ENCODE measurements at regions of chr13 and their contacts with region 1.

Region 1: DNA sequence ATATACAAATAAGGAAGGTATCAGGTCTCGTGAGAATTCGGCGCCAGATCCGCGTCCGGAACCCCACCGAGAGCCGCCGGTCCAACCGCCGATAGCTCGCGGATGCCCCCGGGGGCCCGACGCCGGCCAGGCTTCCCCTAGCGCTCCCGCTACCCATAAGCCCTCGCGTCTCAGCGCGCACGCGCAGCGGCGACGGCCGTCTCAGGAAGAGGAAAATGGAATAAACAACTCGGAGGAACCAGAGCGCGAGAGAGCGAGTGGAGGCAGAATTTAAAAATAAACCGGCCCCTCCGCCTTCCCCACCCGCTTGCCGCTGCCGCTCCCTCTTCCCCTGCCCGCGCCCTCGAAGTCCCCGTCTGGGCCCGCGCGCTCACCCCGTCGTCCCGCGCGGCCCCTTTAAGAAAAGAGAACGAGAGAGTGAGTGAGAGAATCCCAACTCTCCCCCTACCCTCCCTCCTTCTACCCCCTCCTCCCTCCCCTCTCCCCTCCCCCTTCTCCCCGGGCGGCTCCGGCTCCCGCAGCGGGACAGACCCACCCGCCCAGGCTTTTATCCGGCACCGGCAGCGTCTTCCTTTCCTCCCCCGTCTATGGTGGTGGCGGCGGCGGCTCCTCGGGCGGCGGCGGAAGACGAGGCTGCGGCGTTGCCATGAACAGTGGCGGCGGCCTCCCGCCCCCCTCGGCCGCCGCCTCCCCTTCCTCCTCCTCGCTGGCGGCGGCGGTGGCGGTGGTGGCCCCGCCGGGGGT is at the start of gene PAN3:
- DNase-seq: peak; percentile 91 to 94 (median 92)
- H3K4me3 ChIP-seq: peak within 1 kb of the TSS; percentile 62 to 67
- H3K4me3 Mint-ChIP-seq: peak within 1 kb of the TSS; percentile 91 to 99 (median 96)
- H3K27ac ChIP-seq: peak within 1 kb of the TSS; percentile 97
- H3K27ac Mint-ChIP-seq: peak within 1 kb of the TSS; percentile 93 to 99 (median 98)
- H3K4me1 ChIP-seq: peaks cover 44% of the 10 kb centered on the region
- H3K4me1 Mint-ChIP-seq: peaks cover 37 to 62% (median 45%) of the 10 kb centered on the region in 4 donors
- H3K27me3 ChIP-seq: no peaks in the 10 kb centered on the region
- H3K27me3 Mint-ChIP-seq: peaks cover 0 to 2% of the 10 kb centered on the region in 2 donors
- total RNA-seq, gene PAN3: 66.0 to 66.7 TPM

Region 2: DNA sequence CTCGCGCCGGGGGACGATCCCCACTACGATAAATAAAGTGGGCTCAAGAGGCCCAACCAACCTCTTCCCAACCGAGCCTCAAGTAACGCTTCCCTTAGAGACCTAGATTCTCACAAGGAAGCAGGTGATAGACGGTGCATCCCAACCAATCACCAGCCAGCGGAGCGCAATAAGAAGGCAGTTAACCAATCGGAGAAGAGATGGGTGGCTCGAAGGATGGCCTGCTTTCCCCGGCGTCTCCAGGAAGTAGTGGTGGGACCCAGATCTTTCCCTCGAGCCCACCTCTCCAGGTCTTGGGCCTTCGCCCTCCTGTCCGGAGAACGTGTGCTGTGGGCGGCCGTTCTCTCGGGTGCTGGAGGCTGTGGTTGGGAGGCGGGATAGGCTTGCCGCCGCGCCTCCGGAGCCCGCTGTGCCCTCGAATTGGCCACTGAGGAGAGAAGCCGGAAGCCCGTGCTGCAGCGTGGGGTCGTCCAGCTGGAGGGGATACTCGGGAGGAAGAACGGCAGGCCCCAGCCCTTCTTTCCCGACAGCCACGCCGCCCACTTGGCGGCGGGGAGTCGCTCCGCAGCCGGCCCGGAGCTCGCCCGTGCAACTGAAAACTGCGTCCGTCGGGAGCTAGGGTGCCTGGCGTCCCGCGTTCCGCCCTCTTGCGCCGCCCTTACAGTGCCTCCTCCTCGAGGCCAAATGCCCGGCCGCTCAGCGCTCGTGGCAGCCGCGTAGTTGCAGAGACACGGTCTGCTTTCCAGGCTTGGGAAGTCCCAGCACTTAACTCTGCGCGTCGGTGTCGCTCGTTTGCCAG is 1916.3 kb before region 1 on chr13 and contains the start of gene RNF6:
- CTCF ChIA-PET with region 1: no interaction called
- POLR2A ChIA-PET with region 1: interaction called, 3 read pairs
- intact Hi-C with region 1: loop called (anchors 2 kb)
- DNase-seq: peak; percentile 88 to 95 (median 91)
- H3K4me3 ChIP-seq: peak within 1 kb of the TSS; percentile 86 to 98
- H3K4me3 Mint-ChIP-seq: peak within 1 kb of the TSS; percentile 95 to 100 (median 100)
- H3K27ac ChIP-seq: peak within 1 kb of the TSS; percentile 94
- H3K27ac Mint-ChIP-seq: peak within 1 kb of the TSS; percentile 92 to 99 (median 99)
- H3K4me1 ChIP-seq: peaks cover 29% of the 10 kb centered on the region
- H3K4me1 Mint-ChIP-seq: peaks cover 28 to 48% (median 41%) of the 10 kb centered on the region in 4 donors
- H3K27me3 ChIP-seq: no peaks in the 10 kb centered on the region
- H3K27me3 Mint-ChIP-seq: peaks cover 0 to 2% of the 10 kb centered on the region in 2 donors
- total RNA-seq, gene RNF6: 46.7 to 47.9 TPM

Region 3: GRCh38 chr13:27251166-27252091 is 886.8 kb before region 1 on chr13 and contains the start of gene RPL21:
- CTCF ChIA-PET with region 1: no interaction called
- POLR2A ChIA-PET with region 1: interaction called, 3 read pairs
- intact Hi-C with region 1: loop called (anchors 1 kb)
- DNase-seq: peak; percentile 92 to 95 (median 93)
- H3K4me3 ChIP-seq: peak within 1 kb of the TSS; percentile 84 to 98
- H3K4me3 Mint-ChIP-seq: peak within 1 kb of the TSS; percentile 93 to 99 (median 96)
- H3K27ac ChIP-seq: peak within 1 kb of the TSS; percentile 99
- H3K27ac Mint-ChIP-seq: peak within 1 kb of the TSS; percentile 98 to 100 (median 100)
- H3K4me1 ChIP-seq: peaks cover 44% of the 10 kb centered on the region
- H3K4me1 Mint-ChIP-seq: peaks cover 34 to 74% (median 54%) of the 10 kb centered on the region in 4 donors
- H3K27me3 ChIP-seq: no peaks in the 10 kb centered on the region
- H3K27me3 Mint-ChIP-seq: no peaks in the 10 kb centered on the region
- total RNA-seq, gene RPL21: 2,008 to 2,177 TPM

Region 4: DNA sequence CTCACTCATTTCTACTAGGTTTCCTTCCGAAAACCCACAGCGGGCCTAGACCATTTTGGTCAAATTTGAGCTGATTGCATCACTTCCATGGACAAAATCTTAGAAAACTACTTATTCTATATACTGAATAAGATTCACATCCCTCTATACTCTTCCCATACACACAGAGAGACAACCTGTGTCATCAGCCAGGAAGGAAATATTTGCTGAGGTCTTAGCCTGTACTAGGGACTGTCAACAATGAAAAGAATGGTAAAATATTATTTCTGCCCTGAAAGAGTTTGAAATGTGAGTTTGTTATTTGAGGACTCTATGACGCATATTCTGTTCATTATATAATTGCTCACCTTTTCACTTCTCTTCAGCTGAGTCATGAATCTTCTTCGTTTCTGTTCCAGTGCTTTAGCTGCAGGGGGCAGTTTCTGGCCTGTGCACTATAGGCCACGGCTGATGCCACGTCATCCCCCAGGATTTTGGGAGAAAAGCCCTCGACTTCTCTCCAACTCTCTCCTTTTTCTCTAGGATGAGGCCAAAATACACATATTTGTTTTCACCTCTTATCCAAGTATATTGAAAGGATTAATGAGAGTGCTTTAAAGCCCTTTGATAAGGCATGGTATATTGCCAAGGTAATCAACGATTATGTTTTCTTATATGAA is 298.2 kb before region 1 on chr13:
- CTCF ChIA-PET with region 1: no interaction called
- POLR2A ChIA-PET with region 1: no interaction called
- intact Hi-C with region 1: no loop called
- DNase-seq: no peak
- H3K4me3 ChIP-seq: no peak overlapping the region
- H3K4me3 Mint-ChIP-seq: no peak overlapping the region
- H3K27ac ChIP-seq: no peak overlapping the region
- H3K27ac Mint-ChIP-seq: no peak overlapping the region
- H3K4me1 ChIP-seq: no peaks in the 10 kb centered on the region
- H3K4me1 Mint-ChIP-seq: no peaks in the 10 kb centered on the region
- H3K27me3 ChIP-seq: no peaks in the 10 kb centered on the region
- H3K27me3 Mint-ChIP-seq: peaks cover 22 to 29% of the 10 kb centered on the region in 2 donors

Region 5: GRCh38 chr13:28058866-28059624 is 79.1 kb before region 1 on chr13:
- CTCF ChIA-PET with region 1: interaction called, 3 read pairs
- POLR2A ChIA-PET with region 1: no interaction called
- intact Hi-C with region 1: loop called (anchors 5 kb)
- DNase-seq: peak in 4 of 5 donors; percentile 21 to 22 (median 22)
- H3K4me3 ChIP-seq: no peak overlapping the region
- H3K4me3 Mint-ChIP-seq: no peak overlapping the region
- H3K27ac ChIP-seq: no peak overlapping the region
- H3K27ac Mint-ChIP-seq: no peak overlapping the region
- H3K4me1 ChIP-seq: no peaks in the 10 kb centered on the region
- H3K4me1 Mint-ChIP-seq: peaks cover 0 to 2% (median 0%) of the 10 kb centered on the region in 4 donors
- H3K27me3 ChIP-seq: peaks cover 4% of the 10 kb centered on the region
- H3K27me3 Mint-ChIP-seq: peaks cover 16 to 18% of the 10 kb centered on the region in 2 donors

Region 6: GRCh38 chr13:28204690-28205443 is 66.7 kb after region 1 on chr13:
- CTCF ChIA-PET with region 1: no interaction called
- POLR2A ChIA-PET with region 1: interaction called, 3 read pairs
- intact Hi-C with region 1: loop called (anchors 5 kb)
- DNase-seq: no peak
- H3K4me3 ChIP-seq: no peak overlapping the region
- H3K4me3 Mint-ChIP-seq: peak overlapping the region in 1 of 8 donors; percentile 24
- H3K27ac ChIP-seq: no peak overlapping the region
- H3K27ac Mint-ChIP-seq: peak overlapping the region in 2 of 7 donors; percentile 49 to 61
- H3K4me1 ChIP-seq: peaks cover 12% of the 10 kb centered on the region
- H3K4me1 Mint-ChIP-seq: peaks cover 21 to 43% (median 36%) of the 10 kb centered on the region in 4 donors
- H3K27me3 ChIP-seq: no peaks in the 10 kb centered on the region
- H3K27me3 Mint-ChIP-seq: no peaks in the 10 kb centered on the region

Region 7: DNA sequence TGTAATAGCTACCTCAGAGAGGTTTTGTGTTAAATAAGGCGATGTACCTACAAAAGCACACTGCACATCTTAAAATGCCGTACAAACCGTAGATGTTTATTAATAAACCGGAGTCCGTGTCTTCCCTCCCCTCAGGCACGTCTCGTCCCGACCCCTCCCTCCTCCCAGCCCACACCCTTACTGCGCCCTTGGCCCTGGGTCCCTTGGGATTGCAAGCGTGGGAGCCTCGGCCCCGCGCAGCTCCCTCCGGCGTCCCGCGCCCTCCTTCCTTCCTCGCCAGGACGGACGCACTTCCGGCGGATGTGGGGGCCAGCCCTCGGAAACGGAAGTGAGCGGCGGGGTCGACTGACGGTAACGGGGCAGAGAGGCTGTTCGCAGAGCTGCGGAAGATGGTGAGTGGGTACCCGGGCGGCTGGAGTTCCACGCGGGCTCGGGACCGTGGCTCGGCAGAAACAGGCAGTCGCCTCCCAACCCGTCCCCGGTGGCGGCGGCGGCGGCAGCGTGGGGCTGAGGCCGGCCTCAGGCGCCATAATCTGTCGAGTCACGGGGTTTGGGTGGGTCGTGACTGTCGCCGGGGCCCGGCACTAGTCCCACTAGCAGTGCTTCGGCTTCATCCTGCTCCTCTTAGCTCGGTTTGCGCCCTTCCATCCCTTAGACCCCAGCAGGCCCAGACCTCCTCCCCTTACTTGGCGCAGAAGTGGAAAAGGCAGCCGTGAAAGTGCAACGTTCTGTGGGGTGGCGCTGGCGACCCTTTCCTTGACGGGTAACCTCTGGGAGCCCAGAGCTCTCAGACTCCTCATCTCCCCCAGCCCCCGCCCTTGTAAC is 520.8 kb after region 1 on chr13 and contains the start of gene POMP:
- CTCF ChIA-PET with region 1: no interaction called
- POLR2A ChIA-PET with region 1: interaction called, 8 read pairs
- intact Hi-C with region 1: loop called (anchors 1 kb)
- DNase-seq: peak; percentile 90 to 94 (median 93)
- H3K4me3 ChIP-seq: peak within 1 kb of the TSS; percentile 76 to 93
- H3K4me3 Mint-ChIP-seq: peak within 1 kb of the TSS; percentile 95 to 99 (median 98)
- H3K27ac ChIP-seq: peak within 1 kb of the TSS; percentile 95
- H3K27ac Mint-ChIP-seq: peak within 1 kb of the TSS; percentile 96 to 100 (median 98)
- H3K4me1 ChIP-seq: peaks cover 40% of the 10 kb centered on the region
- H3K4me1 Mint-ChIP-seq: peaks cover 34 to 63% (median 54%) of the 10 kb centered on the region in 4 donors
- H3K27me3 ChIP-seq: no peaks in the 10 kb centered on the region
- H3K27me3 Mint-ChIP-seq: no peaks in the 10 kb centered on the region
- total RNA-seq, gene POMP: 23.0 to 24.5 TPM

Region 8: DNA sequence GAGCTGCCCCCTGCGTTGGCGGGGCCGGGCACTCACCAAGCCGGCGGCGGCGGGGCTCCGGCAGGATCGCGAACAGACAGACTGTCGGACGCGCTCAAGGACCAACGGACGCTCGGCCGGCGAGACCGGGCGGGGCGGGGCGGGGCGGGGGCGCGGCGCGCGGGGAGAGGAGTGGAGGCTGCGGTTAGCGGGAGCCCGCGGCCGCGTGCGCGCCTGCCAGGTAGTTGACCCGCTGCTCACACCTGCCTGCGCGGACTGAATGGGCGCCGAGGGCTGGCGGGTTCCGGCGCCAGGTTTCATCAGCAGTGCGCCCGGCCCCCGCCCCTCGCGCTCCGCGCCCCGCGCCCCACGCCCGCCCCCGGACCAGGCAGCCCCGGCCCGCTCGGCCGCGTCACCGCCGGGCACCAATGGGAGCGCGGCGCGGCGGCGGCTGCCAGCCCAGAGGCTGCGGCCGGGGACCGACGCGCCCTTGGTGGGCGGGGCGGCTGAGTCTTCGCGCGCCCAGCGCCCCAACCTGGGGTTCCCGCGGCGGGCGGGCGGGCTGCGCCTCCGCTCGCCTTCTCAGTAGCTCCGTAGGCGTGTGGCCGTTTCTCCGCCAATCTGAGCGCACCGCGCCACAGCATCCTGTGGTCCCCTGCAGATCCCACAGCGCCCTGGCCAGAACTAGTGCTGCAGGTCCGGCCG is 1457.3 kb after region 1 on chr13 and contains the start of gene SLC7A1:
- CTCF ChIA-PET with region 1: no interaction called
- POLR2A ChIA-PET with region 1: no interaction called
- intact Hi-C with region 1: loop called (anchors 10 kb)
- DNase-seq: peak; percentile 80 to 90 (median 88)
- H3K4me3 ChIP-seq: peak within 1 kb of the TSS; percentile 59 to 61
- H3K4me3 Mint-ChIP-seq: peak within 1 kb of the TSS; percentile 87 to 94 (median 92)
- H3K27ac ChIP-seq: peak within 1 kb of the TSS; percentile 66
- H3K27ac Mint-ChIP-seq: peak within 1 kb of the TSS; percentile 90 to 97 (median 93)
- H3K4me1 ChIP-seq: peaks cover 25% of the 10 kb centered on the region
- H3K4me1 Mint-ChIP-seq: peaks cover 22 to 49% (median 34%) of the 10 kb centered on the region in 4 donors
- H3K27me3 ChIP-seq: no peaks in the 10 kb centered on the region
- H3K27me3 Mint-ChIP-seq: peaks cover 0 to 1% of the 10 kb centered on the region in 2 donors
- total RNA-seq, gene SLC7A1: 38.6 to 42.6 TPM

Measured in CD4-positive, alpha-beta memory T cell (primary cell).